ENCODE measurements at regions of chr5 and their contacts with region 1.

Region 1: GRCh38 chr5:74640450-74640953 is at the start of gene ENC1:
- DNase-seq: peak; percentile 99
- H3K4me3 ChIP-seq: peak within 1 kb of the TSS; percentile 64 to 87 (median 78)
- H3K27ac ChIP-seq: peak within 1 kb of the TSS; percentile 84 to 98 (median 92)
- H3K4me1 ChIP-seq: peaks cover 18 to 88% (median 64%) of the 10 kb centered on the region in 6 donors
- H3K27me3 ChIP-seq: peaks cover 0 to 19% (median 0%) of the 10 kb centered on the region in 7 donors
- CTCF ChIP-seq: peak; percentile 48 to 90 (median 70)
- POLR2A ChIP-seq: peak; percentile 73 to 79 (median 74)
- total RNA-seq, gene ENC1: 5.4 to 19.5 (median 13.5) TPM

Region 2: DNA sequence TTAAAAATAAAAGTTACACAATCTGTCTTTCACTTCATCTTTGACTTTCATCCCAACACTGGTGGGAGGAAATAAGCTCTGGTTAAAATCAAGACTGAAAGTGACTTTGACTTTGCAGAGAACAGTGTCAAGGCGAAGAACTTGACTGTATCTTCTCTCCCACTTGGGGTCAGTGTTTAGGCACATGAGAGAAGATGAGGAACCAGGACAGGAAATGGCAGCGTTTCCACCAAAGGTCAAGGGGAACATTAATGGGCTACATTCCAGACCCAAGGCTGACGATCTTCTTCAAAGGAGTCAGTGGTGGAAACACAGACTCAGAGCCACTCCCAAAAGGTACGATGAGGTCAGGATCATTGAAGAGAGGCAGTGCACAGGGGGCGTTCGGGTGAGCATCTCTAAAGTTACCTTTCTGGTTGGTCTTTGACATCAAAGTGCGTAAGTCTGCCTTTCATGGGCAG is 605.0 kb before region 1 on chr5:
- intact Hi-C with region 1: loop called (anchors 10 kb)
- DNase-seq: no peak
- H3K4me3 ChIP-seq: no peak overlapping the region
- H3K27ac ChIP-seq: no peak overlapping the region
- H3K4me1 ChIP-seq: peaks cover 0 to 16% (median 11%) of the 10 kb centered on the region in 6 donors
- H3K27me3 ChIP-seq: peaks cover 0 to 7% (median 0%) of the 10 kb centered on the region in 7 donors
- CTCF ChIP-seq: peak in 4 of 11 experiments; percentile 17 to 41 (median 28)
- POLR2A ChIP-seq: no peak

Region 3: DNA sequence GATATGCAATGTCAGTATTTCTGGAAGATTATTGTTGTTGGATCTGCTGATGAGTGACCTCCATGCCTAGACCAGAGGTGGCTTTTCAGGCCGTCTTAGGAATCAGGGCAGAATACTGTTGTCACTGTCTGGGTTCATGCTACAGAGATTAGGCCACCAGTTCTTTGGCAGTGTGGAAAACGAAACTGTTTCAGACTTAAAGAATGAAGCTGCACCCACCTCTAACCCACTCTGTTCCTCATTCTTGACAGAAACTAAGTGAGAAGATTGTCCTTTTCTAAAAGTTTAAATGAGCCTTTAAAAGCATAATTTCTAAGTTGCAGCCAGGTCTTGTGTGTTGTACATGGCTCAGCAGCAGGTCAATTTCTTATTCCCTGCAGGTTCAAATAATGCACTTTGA is 444.3 kb before region 1 on chr5:
- intact Hi-C with region 1: no loop called
- DNase-seq: no peak
- H3K4me3 ChIP-seq: no peak overlapping the region
- H3K27ac ChIP-seq: no peak overlapping the region
- H3K4me1 ChIP-seq: peaks cover 0 to 4% (median 0%) of the 10 kb centered on the region in 6 donors
- H3K27me3 ChIP-seq: no peaks in the 10 kb centered on the region
- CTCF ChIP-seq: no peak
- POLR2A ChIP-seq: no peak

Region 4: DNA sequence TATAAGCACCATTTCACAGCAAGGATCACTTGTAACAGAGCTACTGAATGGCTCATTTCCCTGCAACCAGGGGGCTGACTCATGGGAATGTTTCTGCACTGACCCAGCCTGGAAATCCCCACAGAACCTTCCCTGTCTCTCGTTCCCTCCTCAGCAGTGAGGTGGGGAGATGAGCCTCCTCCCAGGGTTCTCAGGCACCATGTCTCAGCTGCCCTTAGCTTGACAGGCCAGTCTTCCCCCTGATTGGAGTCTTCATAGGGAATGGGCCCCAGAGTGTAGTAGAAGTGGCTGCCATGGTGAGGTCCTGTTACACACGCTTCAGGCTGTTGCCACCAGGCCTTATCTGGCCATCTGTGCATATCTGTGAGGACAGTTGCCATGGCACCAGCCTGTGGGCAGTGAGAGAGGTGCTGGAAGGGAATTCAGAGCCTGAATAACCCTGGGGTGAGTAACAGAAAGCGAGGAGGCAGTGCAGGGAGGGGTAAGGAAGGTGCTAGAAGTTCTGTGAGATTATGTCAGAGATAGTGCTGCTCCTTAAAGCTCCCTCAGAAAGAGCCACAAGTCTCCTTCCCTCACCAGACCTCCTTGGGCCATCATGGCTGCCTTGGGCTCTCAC is 324.3 kb before region 1 on chr5:
- intact Hi-C with region 1: no loop called
- DNase-seq: no peak
- H3K4me3 ChIP-seq: no peak overlapping the region
- H3K27ac ChIP-seq: no peak overlapping the region
- H3K4me1 ChIP-seq: no peaks in the 10 kb centered on the region
- H3K27me3 ChIP-seq: no peaks in the 10 kb centered on the region
- CTCF ChIP-seq: no peak
- POLR2A ChIP-seq: no peak

Region 5: DNA sequence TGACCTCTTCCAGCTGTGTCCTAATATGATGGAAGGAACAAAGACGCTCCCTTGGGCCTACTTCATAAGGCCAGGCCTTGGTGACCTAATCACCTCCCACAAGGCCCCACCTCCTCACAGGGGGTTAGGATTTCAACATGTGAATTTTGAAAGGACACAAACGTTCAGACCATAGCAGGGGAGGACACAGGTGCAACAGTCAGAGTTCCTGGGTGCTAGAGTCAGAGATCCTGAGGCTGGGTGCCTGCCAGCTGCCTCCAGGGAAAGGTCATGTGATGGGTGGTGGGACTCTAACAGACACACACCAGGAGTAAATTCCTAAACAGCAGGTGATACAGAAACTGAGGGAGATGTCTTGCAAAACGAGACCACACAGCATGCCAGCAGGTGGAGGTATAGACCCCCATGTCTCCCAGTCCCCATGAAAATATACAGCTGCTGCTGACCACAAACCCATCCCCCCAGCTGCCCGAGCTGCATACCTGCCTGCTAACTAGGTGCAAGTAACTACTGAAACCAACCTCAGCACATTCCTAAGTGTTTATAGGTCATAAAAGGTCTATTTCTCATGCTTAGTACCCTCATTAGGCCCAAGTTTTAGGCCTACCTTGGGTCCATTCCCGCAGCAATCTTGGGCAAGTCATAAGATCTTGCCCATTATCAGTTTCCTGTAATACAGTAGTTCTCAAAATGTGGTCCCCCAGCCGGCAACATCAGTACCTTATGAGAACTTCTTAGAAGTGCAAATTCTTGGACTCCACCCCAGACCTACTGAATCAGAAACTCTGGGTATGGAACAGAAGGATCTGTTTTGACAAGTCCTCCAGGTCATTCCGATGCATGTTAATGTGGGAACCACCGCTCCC is 245.4 kb before region 1 on chr5:
- intact Hi-C with region 1: loop called (anchors 10 kb)
- DNase-seq: no peak
- H3K4me3 ChIP-seq: no peak overlapping the region
- H3K27ac ChIP-seq: no peak overlapping the region
- H3K4me1 ChIP-seq: no peaks in the 10 kb centered on the region
- H3K27me3 ChIP-seq: no peaks in the 10 kb centered on the region
- CTCF ChIP-seq: no peak
- POLR2A ChIP-seq: no peak

Region 6: DNA sequence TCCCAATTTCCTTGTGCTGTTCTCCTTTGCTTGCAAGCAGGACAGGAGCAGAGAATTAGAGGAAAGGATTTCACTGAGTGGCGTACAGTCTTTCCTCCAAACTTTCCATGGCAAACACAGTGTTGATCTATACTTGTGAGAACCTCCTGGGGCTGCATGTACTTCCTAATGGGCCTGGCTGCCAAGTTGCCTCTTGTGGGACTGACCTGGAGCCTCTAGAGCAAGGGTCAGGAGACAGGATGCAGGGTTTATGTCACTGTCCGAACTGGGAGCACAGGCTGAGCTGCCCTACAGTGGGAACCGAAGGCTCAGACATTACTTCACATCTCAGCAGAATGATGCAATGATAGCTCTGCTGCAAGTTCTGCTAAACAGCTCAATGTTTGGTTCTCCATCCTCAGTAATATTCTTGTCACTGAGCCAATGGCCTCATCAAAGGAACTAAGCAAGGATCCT is 102.3 kb before region 1 on chr5:
- intact Hi-C with region 1: no loop called
- DNase-seq: peak; percentile 74
- H3K4me3 ChIP-seq: no peak overlapping the region
- H3K27ac ChIP-seq: peak overlapping the region in 6 of 8 donors; percentile 37 to 83 (median 70)
- H3K4me1 ChIP-seq: peaks cover 0 to 23% (median 15%) of the 10 kb centered on the region in 6 donors
- H3K27me3 ChIP-seq: no peaks in the 10 kb centered on the region
- CTCF ChIP-seq: no peak
- POLR2A ChIP-seq: no peak

Region 7: DNA sequence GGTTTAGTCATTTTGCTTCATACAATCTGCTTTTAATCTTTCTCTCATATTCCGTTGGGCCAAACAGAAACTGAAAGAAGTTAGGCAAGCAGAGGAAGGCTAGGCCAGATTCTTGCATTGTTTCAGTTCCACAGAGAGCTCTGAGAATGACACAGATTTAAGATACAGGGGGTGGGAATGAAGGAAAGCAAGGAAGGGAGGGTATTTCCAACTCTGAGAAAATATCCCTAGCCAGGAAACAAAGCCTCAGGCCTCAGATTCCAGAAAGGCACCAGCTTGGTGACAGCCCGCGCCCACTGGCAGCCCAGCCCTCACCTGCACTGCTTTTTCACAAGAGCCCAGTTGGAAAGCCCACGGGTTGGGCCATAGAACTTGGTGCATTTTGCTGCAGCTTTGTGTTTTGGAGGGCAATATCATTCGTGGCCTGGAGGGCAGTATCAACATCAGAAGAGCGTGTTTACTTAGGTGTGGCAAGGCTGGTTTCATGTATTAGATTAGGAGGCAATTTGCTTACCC is 63.5 kb before region 1 on chr5:
- intact Hi-C with region 1: loop called (anchors 10 kb)
- DNase-seq: no peak
- H3K4me3 ChIP-seq: peak overlapping the region in 2 of 8 donors; percentile 1 to 40
- H3K27ac ChIP-seq: peak overlapping the region; percentile 59 to 82 (median 74)
- H3K4me1 ChIP-seq: peaks cover 0 to 36% (median 17%) of the 10 kb centered on the region in 6 donors
- H3K27me3 ChIP-seq: no peaks in the 10 kb centered on the region
- CTCF ChIP-seq: no peak
- POLR2A ChIP-seq: no peak

Region 8: GRCh38 chr5:74736759-74737158 is 96.3 kb after region 1 on chr5:
- intact Hi-C with region 1: no loop called
- DNase-seq: no peak
- H3K4me3 ChIP-seq: no peak overlapping the region
- H3K27ac ChIP-seq: no peak overlapping the region
- H3K4me1 ChIP-seq: no peaks in the 10 kb centered on the region
- H3K27me3 ChIP-seq: no peaks in the 10 kb centered on the region
- CTCF ChIP-seq: no peak
- POLR2A ChIP-seq: no peak

Measured in spleen (tissue), 13 donors.